ENCODE measurements at regions of chr1 and their contacts with region 1.

Region 1: DNA sequence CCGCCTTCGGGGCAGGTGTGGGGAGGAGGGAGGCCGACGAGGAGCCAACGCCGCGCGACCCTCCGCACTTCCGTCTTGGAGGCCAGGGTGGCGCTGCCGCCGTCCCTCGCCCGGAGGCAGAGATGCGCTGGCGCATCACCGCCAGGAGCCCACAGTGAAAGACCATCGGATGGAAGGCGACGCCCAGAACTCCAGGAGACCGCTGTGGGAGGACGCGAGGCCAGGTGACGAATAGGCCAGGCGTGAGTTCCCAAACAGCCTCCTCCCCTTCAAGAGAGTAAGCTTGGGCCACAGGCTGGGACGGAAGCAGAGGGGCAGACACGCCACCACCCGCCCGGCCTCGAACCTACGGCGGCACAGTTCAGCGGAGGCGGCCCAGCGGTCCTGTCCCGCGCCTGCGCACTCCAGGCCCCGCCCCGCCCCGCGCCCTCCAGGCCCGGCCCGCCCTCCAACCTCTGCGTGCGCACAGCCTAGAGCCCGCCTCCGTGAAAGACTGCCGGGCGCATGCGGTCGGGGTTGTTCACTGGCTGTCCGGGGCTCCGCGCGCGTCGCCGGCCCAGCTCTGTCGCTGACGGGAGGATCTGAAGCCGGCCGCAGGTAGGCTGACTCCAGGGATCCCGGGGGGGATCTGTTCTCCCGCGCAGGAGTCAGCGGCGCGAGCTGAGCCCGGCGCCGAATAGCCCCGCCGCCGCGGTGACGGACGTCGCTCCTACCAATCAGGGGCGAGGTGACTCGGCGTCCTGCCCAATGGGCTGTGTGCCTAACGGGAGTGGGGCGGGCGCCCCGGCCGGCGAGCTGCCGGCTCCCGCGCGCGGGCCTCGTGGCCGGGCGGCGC is at the start of gene CTPS1:
- DNase-seq: peak; percentile 94 to 99 (median 96)

Region 2: GRCh38 chr1:41003640-41004220 is 24.3 kb after region 1 on chr1:
- intact Hi-C with region 1: loop called (anchors 2 kb)
- DNase-seq: peak; percentile 76 to 98 (median 91)

Measured in posterior cingulate gyrus (tissue), 11 donors.